K562 (cell line): ENCODE measurements at regions of chr11 and their contacts with region 1.

Region 1: GRCh38 chr11:62805076-62805892 is at the start of gene NXF1:
- DNase-seq: peak; percentile 97 to 98 (median 98)
- ATAC-seq: peak; percentile 91
- H3K4me3 ChIP-seq: peak within 1 kb of the TSS; percentile 94
- H3K27ac ChIP-seq: peak within 1 kb of the TSS; percentile 74
- H3K4me1 ChIP-seq: peaks cover 11 to 19% of the 10 kb centered on the region in 2 experiments; a peak in 4 of 5 replicates
- H3K27me3 ChIP-seq: no peaks in the 10 kb centered on the region
- CTCF ChIP-seq: peak in 2 of 3 experiments; percentile 7 to 12; a peak in 2 of 6 replicates
- EP300 ChIP-seq: no peak; the same call in 1 of the 2 replicates
- POLR2A ChIP-seq: peak; percentile 100
- RAD21 ChIP-seq: 0 out of 4 replicates have a peak, but pooled peaks of 1 of the 2 experiments have one; percentile 4
- polyA plus RNA-seq, gene NXF1: 26.8 to 68.8 TPM

Region 2: DNA sequence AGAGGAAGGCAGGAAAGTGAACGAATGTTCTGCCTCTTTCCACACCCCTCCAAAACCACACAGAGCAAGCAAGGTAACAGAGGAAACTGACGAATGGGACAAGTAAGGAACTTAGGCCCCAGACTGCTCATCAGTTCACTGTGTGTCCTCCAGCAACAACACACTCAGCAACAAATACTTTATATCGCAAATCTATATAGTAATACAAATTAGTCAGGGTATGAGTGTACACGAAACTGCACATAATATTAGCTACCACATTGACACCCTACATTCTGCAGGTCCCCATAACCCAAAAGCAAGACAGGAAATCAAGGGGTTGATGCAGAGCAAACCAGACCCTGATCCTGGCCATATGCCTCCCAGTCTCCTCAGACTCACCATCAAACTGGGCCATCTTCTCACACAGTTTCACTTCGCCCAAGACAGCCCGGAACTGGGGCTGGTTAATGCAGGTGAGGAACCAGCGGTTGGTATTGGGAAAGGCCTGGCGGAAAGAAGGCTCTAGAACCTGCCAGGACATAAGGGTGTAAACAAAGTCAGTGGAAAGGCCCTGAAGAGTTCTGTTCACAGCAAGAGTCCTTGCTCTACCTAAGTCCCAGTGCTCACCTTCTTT is 238.2 kb before region 1 on chr11:
- CTCF ChIA-PET with region 1: no interaction called
- POLR2A ChIA-PET with region 1: no interaction called
- in situ Hi-C with region 1: no loop called
- intact Hi-C with region 1: no loop called
- DNase-seq: no peak
- ATAC-seq: no peak
- H3K4me3 ChIP-seq: no peak overlapping the region
- H3K27ac ChIP-seq: no peak overlapping the region; the same call in 2 of the 3 replicates
- H3K4me1 ChIP-seq: peaks cover 14 to 20% of the 10 kb centered on the region in 2 experiments; a peak in 4 of 5 replicates
- H3K27me3 ChIP-seq: no peaks in the 10 kb centered on the region
- CTCF ChIP-seq: no peak
- EP300 ChIP-seq: no peak
- POLR2A ChIP-seq: no peak
- RAD21 ChIP-seq: no peak

Region 3: GRCh38 chr11:62816557-62816956 is 11.3 kb after region 1 on chr11:
- CTCF ChIA-PET with region 1: no interaction called
- POLR2A ChIA-PET with region 1: interaction called, 40 read pairs
- in situ Hi-C with region 1: no loop called
- intact Hi-C with region 1: no loop called
- DNase-seq: no peak
- ATAC-seq: no peak
- H3K4me3 ChIP-seq: no peak overlapping the region
- H3K27ac ChIP-seq: no peak overlapping the region
- H3K4me1 ChIP-seq: no peaks in the 10 kb centered on the region; a peak in 2 of 5 replicates
- H3K27me3 ChIP-seq: no peaks in the 10 kb centered on the region
- CTCF ChIP-seq: no peak
- EP300 ChIP-seq: no peak
- POLR2A ChIP-seq: no peak
- RAD21 ChIP-seq: no peak

Region 4: DNA sequence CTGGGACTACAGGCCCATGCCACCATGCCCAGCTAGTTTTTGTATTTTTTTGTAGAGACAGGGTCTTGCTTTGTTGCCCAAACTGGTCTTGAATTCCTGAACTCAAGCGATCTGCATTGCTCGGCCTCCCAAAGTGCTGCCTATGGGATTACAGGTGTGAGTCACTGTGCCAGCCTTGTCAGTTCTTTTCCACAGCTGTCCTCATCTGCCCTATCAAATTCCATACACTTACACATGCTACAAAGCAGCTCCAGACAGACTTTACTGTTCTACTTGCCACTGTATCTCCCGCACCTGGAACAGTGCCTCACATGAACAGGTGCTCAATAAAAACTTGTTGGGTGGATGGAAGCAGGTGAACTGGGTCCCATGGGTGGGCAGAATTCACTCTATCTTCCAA is 18.4 kb after region 1 on chr11:
- CTCF ChIA-PET with region 1: no interaction called
- POLR2A ChIA-PET with region 1: interaction called, 40 read pairs
- in situ Hi-C with region 1: no loop called
- intact Hi-C with region 1: no loop called
- DNase-seq: peak in 1 of 4 experiments; percentile 4
- ATAC-seq: no peak
- H3K4me3 ChIP-seq: no peak overlapping the region
- H3K27ac ChIP-seq: no peak overlapping the region
- H3K4me1 ChIP-seq: no peaks in the 10 kb centered on the region
- H3K27me3 ChIP-seq: no peaks in the 10 kb centered on the region
- CTCF ChIP-seq: no peak
- EP300 ChIP-seq: no peak
- POLR2A ChIP-seq: no peak
- RAD21 ChIP-seq: no peak

Region 5: GRCh38 chr11:62831520-62832335 is 26.4 kb after region 1 on chr11 and contains the start of gene STX5:
- CTCF ChIA-PET with region 1: no interaction called
- POLR2A ChIA-PET with region 1: interaction called, 22 read pairs
- in situ Hi-C with region 1: no loop called
- intact Hi-C with region 1: loop called (anchors 1 kb)
- DNase-seq: peak; percentile 94 to 99 (median 96)
- ATAC-seq: peak; percentile 94
- H3K4me3 ChIP-seq: peak within 1 kb of the TSS; percentile 94
- H3K27ac ChIP-seq: peak within 1 kb of the TSS; percentile 98
- H3K4me1 ChIP-seq: peaks cover 7 to 17% of the 10 kb centered on the region in 2 experiments; a peak in 4 of 5 replicates
- H3K27me3 ChIP-seq: no peaks in the 10 kb centered on the region
- CTCF ChIP-seq: no peak
- EP300 ChIP-seq: no peak
- POLR2A ChIP-seq: peak; percentile 92
- RAD21 ChIP-seq: no peak
- polyA plus RNA-seq, gene STX5: 2.8 to 3.6 TPM

Region 6: DNA sequence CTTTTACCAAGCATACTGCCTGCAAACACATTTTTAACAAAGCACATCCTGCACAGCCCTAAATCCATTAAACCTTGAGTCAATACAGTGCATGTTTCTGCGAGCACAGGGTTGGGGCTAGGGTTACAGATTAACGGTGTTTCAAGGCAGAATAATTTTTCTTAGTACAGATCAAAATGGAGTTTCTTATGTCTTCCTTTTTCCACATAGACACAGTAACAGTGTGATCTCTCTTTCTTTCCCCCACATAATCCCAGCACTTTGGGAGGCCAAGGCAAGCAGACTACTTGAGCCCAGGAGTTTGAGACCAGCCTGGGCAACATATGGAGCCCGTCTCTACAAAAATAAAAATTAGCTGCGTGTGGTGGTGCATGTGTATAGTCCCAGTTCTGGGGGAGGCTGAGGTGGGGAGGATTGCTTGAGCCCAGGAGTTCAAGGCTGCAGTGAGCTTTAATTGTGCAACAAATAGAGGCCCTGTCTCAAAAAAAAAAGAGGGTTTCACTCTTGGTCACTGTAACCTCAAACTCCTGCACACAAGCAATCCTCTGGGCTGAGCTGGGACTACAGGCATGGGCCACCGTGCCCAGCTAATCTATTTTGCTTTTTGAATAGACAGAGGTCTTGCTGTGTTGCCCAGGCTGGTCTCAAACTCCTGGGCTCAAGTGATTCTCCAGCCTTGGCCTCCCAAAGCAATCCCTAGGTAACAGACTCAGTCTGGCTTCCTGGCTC is 55.7 kb after region 1 on chr11:
- CTCF ChIA-PET with region 1: no interaction called
- POLR2A ChIA-PET with region 1: interaction called, 31 read pairs
- in situ Hi-C with region 1: no loop called
- intact Hi-C with region 1: loop called (anchors 5 kb)
- DNase-seq: no peak
- ATAC-seq: no peak
- H3K4me3 ChIP-seq: peak overlapping the region; percentile 30; the same call in 1 of the 2 replicates
- H3K27ac ChIP-seq: peak overlapping the region; percentile 63; the same call in 2 of the 3 replicates
- H3K4me1 ChIP-seq: peaks cover 22 to 28% of the 10 kb centered on the region in 2 experiments; a peak in 4 of 5 replicates
- H3K27me3 ChIP-seq: no peaks in the 10 kb centered on the region
- CTCF ChIP-seq: no peak
- EP300 ChIP-seq: no peak
- POLR2A ChIP-seq: no peak
- RAD21 ChIP-seq: peak in 1 of 2 experiments; percentile 7; a peak in 1 of 4 replicates

Region 7: DNA sequence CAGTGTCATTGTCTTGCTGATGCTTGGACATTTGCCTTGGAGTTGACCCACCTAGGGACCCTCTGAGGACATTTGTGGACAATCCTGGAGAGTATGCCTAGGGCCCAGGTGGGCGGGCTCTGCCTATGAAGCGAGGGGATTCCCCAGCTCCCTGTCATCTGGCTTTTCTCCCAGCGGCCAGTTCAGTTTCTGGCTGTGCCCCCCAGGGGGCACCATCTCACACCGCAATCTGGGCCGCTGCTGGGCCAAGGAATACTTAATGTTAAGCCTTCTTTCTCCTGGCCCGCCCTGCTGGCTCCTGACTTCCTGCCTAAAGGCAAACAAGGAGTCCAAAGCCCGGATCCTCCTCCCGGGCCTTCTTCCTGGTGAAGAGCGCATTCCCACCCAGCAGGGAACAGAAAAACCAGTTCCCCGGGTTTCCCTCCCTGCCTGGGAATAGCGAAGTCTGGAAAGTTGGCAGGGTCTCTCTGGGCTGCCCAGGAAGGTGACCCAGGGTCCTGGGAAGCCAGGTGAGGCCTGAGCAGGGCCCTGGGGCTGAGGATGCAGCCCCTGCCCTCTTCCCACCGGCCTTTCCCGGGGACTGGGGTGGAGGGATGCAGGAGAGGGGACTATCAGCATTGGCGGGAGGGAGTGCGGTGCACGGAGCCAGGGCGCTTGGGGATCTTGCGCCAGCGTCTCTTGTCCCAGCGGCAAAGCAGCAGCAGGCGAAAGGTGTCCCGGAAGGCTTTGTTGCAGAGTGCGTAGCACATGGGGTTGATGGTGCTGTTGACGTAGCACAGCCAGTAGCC is 104.0 kb after region 1 on chr11:
- CTCF ChIA-PET with region 1: no interaction called
- POLR2A ChIA-PET with region 1: no interaction called
- in situ Hi-C with region 1: no loop called
- intact Hi-C with region 1: no loop called
- DNase-seq: peak; percentile 65 to 72 (median 70)
- ATAC-seq: peak; percentile 75
- H3K4me3 ChIP-seq: no peak overlapping the region
- H3K27ac ChIP-seq: no peak overlapping the region
- H3K4me1 ChIP-seq: peaks cover 6 to 18% of the 10 kb centered on the region in 2 experiments
- H3K27me3 ChIP-seq: peaks cover 2 to 18% of the 10 kb centered on the region in 2 experiments; a peak in 2 of 5 replicates
- CTCF ChIP-seq: peak; percentile 77 to 86 (median 84)
- EP300 ChIP-seq: no peak
- POLR2A ChIP-seq: no peak
- RAD21 ChIP-seq: peak; percentile 65 to 77